ENCODE measurements at regions of chr2 and their contacts with region 1.

Region 1: DNA sequence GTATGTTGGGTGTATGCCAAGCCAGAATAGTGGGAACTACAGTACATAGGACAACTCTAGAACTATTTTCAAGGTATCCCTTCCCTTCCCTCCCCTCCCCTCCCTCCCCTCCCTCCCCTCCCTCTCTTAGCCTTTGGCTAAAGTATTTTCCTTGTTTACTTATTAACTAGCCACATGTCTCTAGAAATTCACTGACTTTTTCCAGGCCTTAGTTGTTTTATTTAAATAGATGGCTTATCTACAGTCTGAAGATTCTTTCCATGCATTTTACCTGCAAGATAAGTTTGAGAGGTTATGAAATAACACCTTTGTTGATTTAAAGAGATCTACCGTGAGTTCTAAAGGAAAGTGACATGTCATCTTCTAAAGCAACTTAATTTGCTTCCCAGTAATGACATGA is 402.2 kb downstream of the PARD3B start:
- DNase-seq: no peak
- H3K4me3 Mint-ChIP-seq: no peak overlapping the region
- H3K27ac Mint-ChIP-seq: peak overlapping the region; percentile 71
- H3K4me1 Mint-ChIP-seq: peaks cover 49% of the 10 kb centered on the region
- H3K27me3 Mint-ChIP-seq: no peaks in the 10 kb centered on the region
- CTCF ChIP-seq: no peak

Region 2: DNA sequence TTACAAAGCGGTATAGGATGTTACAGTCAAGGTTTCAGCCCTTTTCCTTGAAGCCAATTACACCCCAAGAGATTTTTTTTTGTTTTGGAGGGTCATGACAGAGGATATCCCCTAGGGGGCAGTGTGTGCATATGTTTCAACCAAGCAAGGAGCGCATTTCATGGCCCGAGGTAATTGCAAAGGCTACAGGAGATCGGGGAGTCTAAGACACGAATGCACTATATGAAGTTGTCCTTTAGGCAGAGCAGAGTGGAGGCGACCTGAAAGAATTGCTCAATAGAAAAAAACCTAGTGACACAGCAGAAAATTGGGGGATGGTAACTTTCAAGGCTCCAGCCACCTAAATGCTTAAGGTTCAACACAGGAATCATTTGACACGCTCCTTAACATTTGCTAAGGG is 622.0 kb before region 1 on chr2:
- CTCF ChIA-PET with region 1: no interaction called
- intact Hi-C with region 1: no loop called
- DNase-seq: peak; percentile 74
- H3K4me3 Mint-ChIP-seq: no peak overlapping the region
- H3K27ac Mint-ChIP-seq: no peak overlapping the region
- H3K4me1 Mint-ChIP-seq: peaks cover 22% of the 10 kb centered on the region
- H3K27me3 Mint-ChIP-seq: no peaks in the 10 kb centered on the region
- CTCF ChIP-seq: peak; percentile 92

Region 3: DNA sequence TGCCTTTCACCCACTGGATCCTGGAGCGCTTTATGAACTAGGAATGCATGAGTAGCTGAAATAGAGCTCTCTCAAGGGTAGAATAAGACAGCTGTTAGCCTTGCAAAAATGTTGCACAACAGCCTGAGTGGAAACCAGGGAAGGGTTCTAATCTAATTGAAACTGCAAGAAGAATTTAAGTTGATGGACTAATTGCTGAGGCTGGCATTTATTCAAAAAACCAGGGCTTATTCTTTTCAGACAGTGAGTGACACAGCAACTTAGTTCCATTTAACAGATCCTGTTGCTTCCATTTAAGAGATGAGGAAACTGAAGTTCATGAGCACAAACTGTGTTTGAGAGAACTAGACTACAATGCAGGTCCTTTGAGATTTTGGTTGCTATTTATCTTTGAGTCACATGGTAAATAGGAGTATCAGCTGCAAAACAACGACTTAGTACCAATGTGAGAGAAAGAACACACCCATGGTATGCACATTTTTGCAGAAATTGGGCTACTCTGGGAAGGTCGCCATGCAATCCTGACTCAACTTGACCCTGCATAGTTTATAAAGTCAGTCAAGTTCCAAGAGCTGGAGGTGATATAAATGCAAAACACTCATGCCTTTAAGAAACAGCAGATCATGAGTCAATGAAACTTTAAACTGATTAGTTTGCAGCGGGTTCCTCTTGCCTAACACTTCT is 478.6 kb before region 1 on chr2:
- CTCF ChIA-PET with region 1: no interaction called
- intact Hi-C with region 1: no loop called
- DNase-seq: no peak
- H3K4me3 Mint-ChIP-seq: no peak overlapping the region
- H3K27ac Mint-ChIP-seq: no peak overlapping the region
- H3K4me1 Mint-ChIP-seq: no peaks in the 10 kb centered on the region
- H3K27me3 Mint-ChIP-seq: no peaks in the 10 kb centered on the region
- CTCF ChIP-seq: no peak

Region 4: GRCh38 chr2:204897561-204897960 is 49.9 kb before region 1 on chr2:
- CTCF ChIA-PET with region 1: interaction called, 5 read pairs
- intact Hi-C with region 1: loop called (anchors 1 kb)
- DNase-seq: peak; percentile 8
- H3K4me3 Mint-ChIP-seq: no peak overlapping the region
- H3K27ac Mint-ChIP-seq: no peak overlapping the region
- H3K4me1 Mint-ChIP-seq: peaks cover 33% of the 10 kb centered on the region
- H3K27me3 Mint-ChIP-seq: no peaks in the 10 kb centered on the region
- CTCF ChIP-seq: no peak

Measured in Calu3 (cell line).